ENCODE measurements at regions of chr3 and their contacts with region 1.

Region 1: GRCh38 chr3:186259612-186260383 is 102.2 kb downstream of the DGKG start:
- DNase-seq: peak; percentile 14 to 48
- ATAC-seq: peak; percentile 69 to 89
- H3K4me3 ChIP-seq: no peak overlapping the region
- H3K27ac ChIP-seq: no peak overlapping the region
- H3K4me1 ChIP-seq: no peaks in the 10 kb centered on the region
- H3K27me3 ChIP-seq: no peaks in the 10 kb centered on the region
- CTCF ChIP-seq: peak; percentile 40 to 86 (median 68)
- POLR2A ChIP-seq: no peak

Region 2: GRCh38 chr3:185397676-185398075 is 862.1 kb before region 1 on chr3:
- in situ Hi-C with region 1: no loop called
- intact Hi-C with region 1: no loop called
- DNase-seq: no peak
- ATAC-seq: peak in 1 of 2 donors; percentile 36
- H3K4me3 ChIP-seq: no peak overlapping the region
- H3K27ac ChIP-seq: no peak overlapping the region
- H3K4me1 ChIP-seq: peaks cover 7 to 14% of the 10 kb centered on the region in 2 donors
- H3K27me3 ChIP-seq: no peaks in the 10 kb centered on the region
- CTCF ChIP-seq: no peak
- POLR2A ChIP-seq: no peak

Region 3: DNA sequence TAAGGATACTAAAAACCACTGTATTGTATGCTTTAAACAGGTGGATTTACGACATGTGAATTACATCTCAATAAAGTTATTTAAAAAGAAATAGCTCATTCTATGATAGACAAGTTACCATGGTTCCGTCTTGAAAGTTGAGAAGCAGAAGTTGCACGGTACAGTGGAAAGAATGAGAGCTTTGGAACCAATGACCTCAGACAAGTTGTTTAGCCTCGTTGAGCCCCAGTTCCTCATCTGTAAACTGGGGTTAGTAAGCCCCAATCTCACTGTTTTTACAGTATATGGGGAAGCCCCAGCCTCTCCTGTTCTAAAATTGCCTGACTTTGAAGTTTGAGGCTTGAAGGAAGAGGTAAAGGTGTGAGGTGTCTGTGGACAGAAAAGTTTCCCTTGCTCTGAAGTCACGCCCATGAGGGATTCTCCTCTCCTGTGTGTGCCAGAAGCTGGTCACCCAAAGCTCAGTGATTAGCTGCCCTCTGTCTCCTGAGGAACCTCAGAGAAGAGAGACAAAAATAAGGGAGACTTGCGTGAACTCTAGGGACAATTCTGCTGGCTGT is 274.4 kb after region 1 on chr3:
- in situ Hi-C with region 1: loop called in 3 of 4 experiments (anchors 5 to 10 kb)
- intact Hi-C with region 1: no loop called
- DNase-seq: no peak
- ATAC-seq: no peak
- H3K4me3 ChIP-seq: no peak overlapping the region
- H3K27ac ChIP-seq: no peak overlapping the region
- H3K4me1 ChIP-seq: no peaks in the 10 kb centered on the region
- H3K27me3 ChIP-seq: no peaks in the 10 kb centered on the region
- CTCF ChIP-seq: no peak
- POLR2A ChIP-seq: no peak

Region 4: DNA sequence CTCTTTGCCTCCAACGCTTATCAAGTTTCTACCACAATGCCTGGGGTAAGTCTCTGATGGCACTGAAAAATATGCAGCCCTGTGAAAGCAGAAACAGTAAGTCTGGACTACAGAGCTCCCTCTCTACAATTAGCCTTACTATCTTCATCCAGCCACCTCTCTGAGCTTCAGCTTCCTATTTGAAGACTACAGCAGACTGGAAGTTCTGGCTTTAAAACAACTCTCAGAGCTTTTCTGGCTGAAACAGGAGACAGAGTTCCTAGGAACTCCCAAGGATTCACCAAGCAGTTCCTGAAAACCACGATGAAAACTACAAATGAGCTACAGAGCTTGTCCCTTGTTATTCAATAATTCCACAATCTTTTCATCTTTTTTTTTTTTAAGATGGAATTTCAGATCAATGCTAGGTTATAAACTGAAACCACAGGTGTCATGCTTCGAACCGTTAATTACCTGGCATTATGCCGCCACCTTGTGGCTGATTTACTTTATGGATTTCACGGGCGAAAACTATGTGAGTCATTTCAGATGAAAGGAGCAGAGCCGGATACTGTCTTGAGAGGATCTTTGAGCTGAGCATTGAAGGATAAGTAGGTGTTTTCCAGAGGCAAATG is 280.5 kb after region 1 on chr3:
- in situ Hi-C with region 1: loop called (anchors 5 to 10 kb)
- intact Hi-C with region 1: loop called (anchors 1 kb)
- DNase-seq: peak; percentile 29 to 51
- ATAC-seq: peak; percentile 73 to 90
- H3K4me3 ChIP-seq: peak overlapping the region in 3 of 4 donors; percentile 7 to 26 (median 7)
- H3K27ac ChIP-seq: no peak overlapping the region
- H3K4me1 ChIP-seq: peaks cover 0 to 6% of the 10 kb centered on the region in 2 donors
- H3K27me3 ChIP-seq: no peaks in the 10 kb centered on the region
- CTCF ChIP-seq: peak; percentile 56 to 72 (median 65)
- POLR2A ChIP-seq: no peak